Panc1 (cell line): ENCODE measurements at regions of chr10 and their contacts with region 1.

Region 1: DNA sequence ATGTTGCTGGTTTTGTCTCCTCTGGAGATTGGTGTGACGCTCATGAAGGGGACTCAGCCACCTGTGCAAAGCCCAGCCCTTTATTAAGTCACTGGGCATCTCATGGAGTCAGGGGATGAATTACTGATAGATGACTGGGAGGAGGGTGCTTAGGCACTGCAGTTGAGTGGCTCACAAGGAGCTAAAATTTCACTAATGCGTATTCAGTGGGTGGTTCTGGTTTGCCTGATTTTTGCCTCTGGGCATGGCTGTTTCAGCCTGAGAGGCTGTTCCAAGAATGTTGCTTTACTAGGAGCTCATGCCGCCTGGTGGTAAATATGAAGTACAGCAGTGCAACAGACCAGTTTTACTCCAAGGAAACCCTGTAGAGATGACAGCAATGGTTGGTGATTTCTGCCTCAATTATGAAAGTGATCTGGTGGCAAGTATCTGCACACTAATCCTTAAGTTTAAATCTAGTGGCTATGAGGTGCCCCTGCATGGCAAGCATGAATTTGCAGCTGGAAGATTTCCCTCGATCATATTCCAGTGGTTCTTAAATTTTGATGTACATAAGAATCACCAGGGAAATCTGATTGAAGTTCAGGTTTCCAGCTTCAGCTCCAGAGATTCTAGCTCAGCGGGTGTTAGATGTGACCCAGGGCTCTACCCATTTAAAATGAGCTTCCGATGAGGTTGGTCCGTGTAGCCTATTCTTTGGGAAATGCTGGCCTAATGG is 19.9 kb downstream of the ACTA2 start:
- DNase-seq: peak; percentile 69
- ATAC-seq: peak; percentile 85
- H3K4me3 ChIP-seq: no peak overlapping the region
- H3K27ac ChIP-seq: no peak overlapping the region
- H3K4me1 ChIP-seq: peaks cover 12% of the 10 kb centered on the region
- H3K27me3 ChIP-seq: no peaks in the 10 kb centered on the region
- CTCF ChIP-seq: peak; percentile 95

Region 2: GRCh38 chr10:88232029-88232895 is 700.4 kb before region 1 on chr10:
- CTCF ChIA-PET with region 1: no interaction called
- POLR2A ChIA-PET with region 1: interaction called, 16 read pairs
- in situ Hi-C with region 1: no loop called
- intact Hi-C with region 1: no loop called
- DNase-seq: no peak
- ATAC-seq: no peak
- H3K4me3 ChIP-seq: no peak overlapping the region
- H3K27ac ChIP-seq: no peak overlapping the region
- H3K4me1 ChIP-seq: no peaks in the 10 kb centered on the region
- H3K27me3 ChIP-seq: no peaks in the 10 kb centered on the region
- CTCF ChIP-seq: no peak

Region 3: DNA sequence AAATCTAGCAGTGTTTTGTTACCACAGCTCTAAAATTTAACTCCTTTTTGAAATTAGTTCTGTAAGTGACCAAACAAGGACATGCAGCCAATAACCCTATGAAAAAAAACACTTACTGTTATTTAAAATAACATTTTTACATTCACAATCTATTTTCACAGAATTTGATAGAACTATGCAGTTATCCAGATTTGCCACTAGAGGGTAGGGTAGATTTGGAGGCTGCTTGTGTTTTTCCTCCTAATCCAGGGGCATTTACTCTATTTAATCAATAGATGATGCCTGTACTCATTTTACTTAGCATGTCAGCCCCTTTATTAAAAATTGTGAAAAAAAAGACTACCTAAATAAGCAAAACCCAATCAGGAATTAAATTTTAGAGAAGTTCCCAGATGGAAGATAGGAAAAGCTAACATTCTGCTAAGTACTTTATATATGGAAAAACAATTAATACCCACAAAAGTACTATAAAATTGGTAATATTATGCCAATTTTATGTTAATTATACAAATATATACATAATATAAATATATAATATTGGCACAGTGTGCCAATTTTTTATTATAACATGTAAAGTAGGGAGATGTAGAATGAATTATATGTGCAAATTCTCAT is 244.7 kb before region 1 on chr10:
- CTCF ChIA-PET with region 1: no interaction called
- POLR2A ChIA-PET with region 1: no interaction called
- in situ Hi-C with region 1: no loop called
- intact Hi-C with region 1: loop called (anchors 5 kb)
- DNase-seq: no peak
- ATAC-seq: no peak
- H3K4me3 ChIP-seq: no peak overlapping the region
- H3K27ac ChIP-seq: peak overlapping the region; percentile 24; the same call in 1 of the 2 replicates
- H3K4me1 ChIP-seq: no peaks in the 10 kb centered on the region
- H3K27me3 ChIP-seq: no peaks in the 10 kb centered on the region
- CTCF ChIP-seq: peak; percentile 86; the same call in 1 of the 2 replicates

Region 4: GRCh38 chr10:88835096-88835909 is 97.4 kb before region 1 on chr10:
- CTCF ChIA-PET with region 1: interaction called, 52 read pairs
- POLR2A ChIA-PET with region 1: interaction called, 3 read pairs
- in situ Hi-C with region 1: no loop called
- intact Hi-C with region 1: loop called (anchors 1 kb)
- DNase-seq: peak; percentile 86
- ATAC-seq: peak; percentile 99
- H3K4me3 ChIP-seq: no peak overlapping the region
- H3K27ac ChIP-seq: 0 out of 2 replicates have a peak overlapping the region, but pooled peaks have one; percentile 8
- H3K4me1 ChIP-seq: peaks cover 3% of the 10 kb centered on the region; the same call in 1 of the 2 replicates
- H3K27me3 ChIP-seq: 0 out of 2 replicates have a peak, but pooled peaks cover 2% of the 10 kb centered on the region
- CTCF ChIP-seq: peak; percentile 94

Region 5: DNA sequence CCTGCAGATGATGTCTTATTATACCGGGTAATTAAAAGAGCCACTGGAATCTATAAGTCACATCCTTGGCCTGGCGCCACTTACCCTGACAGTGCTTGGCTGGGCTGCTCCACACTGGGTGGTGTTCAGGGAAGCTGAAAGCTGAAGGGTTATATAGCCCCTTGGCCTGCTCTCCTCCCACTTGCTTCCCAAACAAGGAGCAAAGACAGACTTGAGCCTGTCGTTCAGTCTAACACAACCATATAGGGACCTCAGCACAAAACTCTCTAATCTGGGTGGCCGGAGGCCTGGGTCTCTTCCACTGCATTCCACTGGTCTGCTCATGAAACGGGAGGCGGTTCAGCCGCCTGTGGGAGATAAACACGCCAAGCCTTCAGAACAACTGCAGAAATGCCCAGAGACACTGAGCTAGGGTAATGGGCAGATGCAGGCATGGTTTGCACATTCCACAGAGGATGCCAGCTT is 20.0 kb after region 1 on chr10 and contains the start of gene ACTA2:
- CTCF ChIA-PET with region 1: no interaction called
- POLR2A ChIA-PET with region 1: no interaction called
- in situ Hi-C with region 1: no loop called
- intact Hi-C with region 1: no loop called
- DNase-seq: no peak
- ATAC-seq: no peak
- H3K4me3 ChIP-seq: no peak within 1 kb of the TSS
- H3K27ac ChIP-seq: no peak within 1 kb of the TSS
- H3K4me1 ChIP-seq: no peaks in the 10 kb centered on the region
- H3K27me3 ChIP-seq: no peaks in the 10 kb centered on the region
- CTCF ChIP-seq: no peak
- total RNA-seq, gene ACTA2: 4.7 TPM

Region 6: GRCh38 chr10:89217057-89217990 is 284.6 kb after region 1 on chr10:
- CTCF ChIA-PET with region 1: interaction called, 5 read pairs
- POLR2A ChIA-PET with region 1: no interaction called
- in situ Hi-C with region 1: no loop called
- intact Hi-C with region 1: loop called (anchors 2 kb)
- DNase-seq: peak; percentile 32
- ATAC-seq: 0 out of 2 replicates have a peak, but pooled peaks have one; percentile 61
- H3K4me3 ChIP-seq: no peak overlapping the region
- H3K27ac ChIP-seq: no peak overlapping the region
- H3K4me1 ChIP-seq: peaks cover 2% of the 10 kb centered on the region; the same call in 1 of the 2 replicates
- H3K27me3 ChIP-seq: no peaks in the 10 kb centered on the region
- CTCF ChIP-seq: peak; percentile 71; the same call in 1 of the 2 replicates

Region 7: DNA sequence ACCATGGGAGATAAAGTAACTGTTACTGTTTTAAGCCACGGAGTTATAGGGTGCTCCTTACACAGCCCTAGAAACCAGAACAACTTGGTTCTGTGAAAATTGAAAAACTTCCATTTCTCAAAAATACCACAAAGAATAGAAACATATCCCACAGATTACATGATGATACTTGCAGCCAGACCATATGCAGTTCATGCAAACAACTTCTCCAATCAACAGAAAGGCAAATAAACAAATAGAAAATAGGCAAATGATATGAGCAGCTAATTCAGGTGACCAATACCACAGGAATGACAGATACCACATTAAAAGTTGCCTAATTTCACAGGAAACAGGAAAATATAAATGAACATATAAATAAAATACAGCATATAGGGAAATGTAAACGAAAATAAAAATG is 1627.6 kb after region 1 on chr10:
- CTCF ChIA-PET with region 1: no interaction called
- POLR2A ChIA-PET with region 1: no interaction called
- in situ Hi-C with region 1: no loop called
- intact Hi-C with region 1: no loop called
- DNase-seq: no peak
- ATAC-seq: no peak
- H3K4me3 ChIP-seq: no peak overlapping the region
- H3K27ac ChIP-seq: no peak overlapping the region
- H3K4me1 ChIP-seq: no peaks in the 10 kb centered on the region
- H3K27me3 ChIP-seq: no peaks in the 10 kb centered on the region
- CTCF ChIP-seq: no peak